Natural killer cell (primary cell): ENCODE measurements at regions of chr1 and their contacts with region 1.

Region 1: GRCh38 chr1:52636721-52637695 is 4.0 kb downstream of the SHISAL2A start:
- DNase-seq: peak; percentile 56 to 87
- ATAC-seq: peak; percentile 49 to 80 (median 72)
- H3K4me3 ChIP-seq: no peak overlapping the region
- H3K4me3 Mint-ChIP-seq: peak overlapping the region; percentile 82
- H3K27ac ChIP-seq: peak overlapping the region; percentile 97
- H3K27ac Mint-ChIP-seq: peak overlapping the region; percentile 96 to 98
- H3K4me1 ChIP-seq: peaks cover 83% of the 10 kb centered on the region
- H3K4me1 Mint-ChIP-seq: peaks cover 76 to 88% of the 10 kb centered on the region in 2 donors
- H3K27me3 ChIP-seq: no peaks in the 10 kb centered on the region
- H3K27me3 Mint-ChIP-seq: no peaks in the 10 kb centered on the region
- CTCF ChIP-seq: no peak

Region 2: GRCh38 chr1:52474807-52475206 is 162.2 kb before region 1 on chr1:
- intact Hi-C with region 1: no loop called
- DNase-seq: no peak
- ATAC-seq: no peak
- H3K4me3 ChIP-seq: no peak overlapping the region
- H3K4me3 Mint-ChIP-seq: no peak overlapping the region
- H3K27ac ChIP-seq: no peak overlapping the region
- H3K27ac Mint-ChIP-seq: no peak overlapping the region
- H3K4me1 ChIP-seq: no peaks in the 10 kb centered on the region
- H3K4me1 Mint-ChIP-seq: no peaks in the 10 kb centered on the region
- H3K27me3 ChIP-seq: no peaks in the 10 kb centered on the region
- H3K27me3 Mint-ChIP-seq: no peaks in the 10 kb centered on the region
- CTCF ChIP-seq: no peak

Region 3: GRCh38 chr1:52601991-52602855 is 34.8 kb before region 1 on chr1 and contains the start of gene GPX7:
- intact Hi-C with region 1: loop called (anchors 1 kb)
- DNase-seq: peak; percentile 61 to 81
- ATAC-seq: peak; percentile 76 to 84 (median 81)
- H3K4me3 ChIP-seq: peak within 1 kb of the TSS; percentile 52
- H3K4me3 Mint-ChIP-seq: peak within 1 kb of the TSS; percentile 87
- H3K27ac ChIP-seq: peak within 1 kb of the TSS; percentile 67
- H3K27ac Mint-ChIP-seq: peak within 1 kb of the TSS; percentile 70 to 81
- H3K4me1 ChIP-seq: peaks cover 26% of the 10 kb centered on the region
- H3K4me1 Mint-ChIP-seq: peaks cover 39 to 59% of the 10 kb centered on the region in 2 donors
- H3K27me3 ChIP-seq: no peaks in the 10 kb centered on the region
- H3K27me3 Mint-ChIP-seq: no peaks in the 10 kb centered on the region
- CTCF ChIP-seq: no peak
- total RNA-seq, gene GPX7: 9.7 to 10.6 (median 10.2) TPM

Region 4: DNA sequence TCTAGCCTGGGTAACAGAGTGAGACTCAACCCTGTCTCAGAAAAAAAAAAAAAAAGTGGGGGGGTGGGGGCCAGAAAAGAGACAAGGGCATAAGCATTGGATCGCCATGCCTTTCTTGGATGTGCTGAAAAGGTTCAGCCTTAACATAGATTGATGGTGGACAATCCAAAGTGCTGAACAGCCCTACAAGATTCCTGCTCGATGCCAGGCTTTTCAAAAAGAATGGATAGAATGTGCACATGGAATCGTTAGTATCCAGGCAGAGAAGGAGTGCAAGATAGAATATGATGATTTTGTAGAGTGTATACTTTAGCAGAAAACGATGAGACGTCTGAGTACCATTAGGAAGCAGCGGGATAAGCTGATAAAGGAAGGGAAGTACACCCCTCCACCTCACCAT is 72.0 kb after region 1 on chr1:
- intact Hi-C with region 1: no loop called
- DNase-seq: no peak
- ATAC-seq: no peak
- H3K4me3 ChIP-seq: no peak overlapping the region
- H3K4me3 Mint-ChIP-seq: no peak overlapping the region
- H3K27ac ChIP-seq: no peak overlapping the region
- H3K27ac Mint-ChIP-seq: no peak overlapping the region
- H3K4me1 ChIP-seq: peaks cover under 1% of the 10 kb centered on the region
- H3K4me1 Mint-ChIP-seq: peaks cover 0 to 5% of the 10 kb centered on the region in 2 donors
- H3K27me3 ChIP-seq: no peaks in the 10 kb centered on the region
- H3K27me3 Mint-ChIP-seq: peaks cover 7 to 15% of the 10 kb centered on the region in 2 donors
- CTCF ChIP-seq: no peak